K562 (cell line): ENCODE measurements at regions of chr2 and their contacts with region 1.

Region 1: DNA sequence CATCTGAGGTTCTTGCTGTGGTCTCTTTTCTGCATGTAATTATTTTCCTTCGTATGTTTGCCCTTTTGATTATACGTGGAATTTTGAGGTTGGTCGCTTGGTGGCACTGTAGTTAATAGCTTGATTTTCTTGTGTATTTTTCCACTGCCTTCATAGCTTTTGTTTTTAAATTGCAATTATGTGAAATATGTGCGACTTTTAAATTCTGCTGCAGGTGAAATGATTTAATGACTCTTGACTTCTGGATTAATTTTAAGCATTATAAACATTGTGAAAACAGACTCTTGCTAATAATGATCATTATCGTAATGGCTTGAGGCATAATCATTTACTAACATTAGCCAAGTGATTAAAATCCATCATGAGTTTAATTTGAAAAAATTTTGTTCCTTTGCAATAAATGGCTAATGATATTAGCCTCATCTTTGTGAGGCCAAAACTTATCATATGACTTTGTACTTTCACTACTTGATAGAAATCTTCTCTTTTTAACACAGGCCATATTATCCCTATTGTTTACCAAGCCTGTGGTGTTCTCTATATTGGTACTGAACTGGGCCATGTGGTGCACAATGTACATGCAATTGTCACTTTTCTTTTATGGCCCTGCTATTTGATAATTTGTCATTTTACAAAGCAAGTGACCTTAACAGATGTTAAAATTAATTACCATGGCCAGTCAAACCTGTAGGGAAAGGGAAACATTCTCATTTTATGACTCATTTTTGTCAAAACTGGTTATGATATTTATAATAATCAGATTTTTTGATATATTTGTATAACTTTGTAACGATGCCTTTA is 62.8 kb upstream of the NEUROD1 start:
- DNase-seq: peak in 2 of 4 experiments; percentile 39 to 68
- ATAC-seq: peak; percentile 81
- H3K4me3 ChIP-seq: no peak overlapping the region
- H3K27ac ChIP-seq: no peak overlapping the region
- H3K4me1 ChIP-seq: no peaks in the 10 kb centered on the region
- H3K27me3 ChIP-seq: no peaks in the 10 kb centered on the region
- CTCF ChIP-seq: peak; percentile 53 to 86 (median 69); a peak in 5 of 6 replicates
- EP300 ChIP-seq: no peak
- POLR2A ChIP-seq: no peak
- RAD21 ChIP-seq: peak; percentile 94 to 95

Region 2: GRCh38 chr2:181904022-181904632 is 161.0 kb after region 1 on chr2:
- CTCF ChIA-PET with region 1: interaction called, 23 read pairs
- POLR2A ChIA-PET with region 1: no interaction called
- in situ Hi-C with region 1: no loop called
- intact Hi-C with region 1: loop called (anchors 1 kb)
- DNase-seq: peak; percentile 38 to 62 (median 42)
- ATAC-seq: peak; percentile 79
- H3K4me3 ChIP-seq: no peak overlapping the region
- H3K27ac ChIP-seq: no peak overlapping the region
- H3K4me1 ChIP-seq: peaks cover 0 to 7% of the 10 kb centered on the region in 2 experiments; a peak in 2 of 5 replicates
- H3K27me3 ChIP-seq: no peaks in the 10 kb centered on the region
- CTCF ChIP-seq: peak; percentile 45 to 78 (median 54); a peak in 5 of 6 replicates
- EP300 ChIP-seq: no peak
- POLR2A ChIP-seq: no peak
- RAD21 ChIP-seq: peak; percentile 82

Region 3: GRCh38 chr2:181953881-181954537 is 210.9 kb after region 1 on chr2:
- CTCF ChIA-PET with region 1: interaction called, 3 read pairs
- POLR2A ChIA-PET with region 1: interaction called, 3 read pairs
- in situ Hi-C with region 1: no loop called
- intact Hi-C with region 1: loop called (anchors 1 kb)
- DNase-seq: peak; percentile 67 to 85 (median 74)
- ATAC-seq: peak; percentile 96
- H3K4me3 ChIP-seq: peak overlapping the region; percentile 40
- H3K27ac ChIP-seq: peak overlapping the region; percentile 50; the same call in 1 of the 3 replicates
- H3K4me1 ChIP-seq: no peaks in the 10 kb centered on the region
- H3K27me3 ChIP-seq: no peaks in the 10 kb centered on the region
- CTCF ChIP-seq: peak; percentile 68 to 80 (median 70)
- EP300 ChIP-seq: no peak
- POLR2A ChIP-seq: no peak
- RAD21 ChIP-seq: peak; percentile 37 to 60

Region 4: DNA sequence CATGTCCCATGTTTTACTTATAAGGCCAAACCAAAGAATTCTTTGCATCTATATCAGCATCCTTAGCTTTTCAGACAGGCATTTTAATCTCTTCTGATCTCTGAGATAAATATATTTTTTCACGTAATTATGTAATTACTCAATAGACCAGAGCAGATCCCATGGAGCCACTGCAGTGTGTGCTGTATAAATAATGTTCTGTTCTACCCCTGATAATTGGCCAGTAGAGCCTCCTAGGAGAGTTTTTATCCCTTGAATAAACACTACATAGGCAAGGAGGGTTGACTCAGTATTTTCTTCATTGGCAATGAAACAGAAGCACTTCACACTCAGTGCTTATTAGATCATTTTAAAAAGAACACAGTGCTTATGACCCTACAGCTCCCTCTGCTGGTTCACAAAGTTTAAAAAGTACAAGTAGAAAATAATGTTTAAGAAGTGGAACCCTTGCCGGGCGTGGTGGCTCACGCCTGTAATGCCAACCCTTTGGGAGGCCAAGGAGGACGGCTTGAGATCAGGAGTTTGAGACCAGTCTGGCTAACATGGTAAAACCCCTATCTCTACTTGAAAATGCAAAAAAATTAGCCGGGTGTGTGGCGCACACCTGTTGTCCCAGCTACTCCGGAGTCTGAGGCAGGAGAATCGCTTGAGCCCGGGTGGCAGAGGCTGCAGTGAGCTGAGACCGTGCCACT is 334.5 kb after region 1 on chr2:
- CTCF ChIA-PET with region 1: interaction called, 8 read pairs
- POLR2A ChIA-PET with region 1: no interaction called
- in situ Hi-C with region 1: loop called (anchors 10 kb)
- intact Hi-C with region 1: loop called (anchors 1 kb)
- DNase-seq: peak in 2 of 4 experiments; percentile 7 to 68
- ATAC-seq: peak; percentile 74
- H3K4me3 ChIP-seq: no peak overlapping the region
- H3K27ac ChIP-seq: no peak overlapping the region
- H3K4me1 ChIP-seq: no peaks in the 10 kb centered on the region
- H3K27me3 ChIP-seq: no peaks in the 10 kb centered on the region
- CTCF ChIP-seq: peak; percentile 21 to 64 (median 59); a peak in 5 of 6 replicates
- EP300 ChIP-seq: no peak
- POLR2A ChIP-seq: no peak
- RAD21 ChIP-seq: peak; percentile 70 to 83

Region 5: DNA sequence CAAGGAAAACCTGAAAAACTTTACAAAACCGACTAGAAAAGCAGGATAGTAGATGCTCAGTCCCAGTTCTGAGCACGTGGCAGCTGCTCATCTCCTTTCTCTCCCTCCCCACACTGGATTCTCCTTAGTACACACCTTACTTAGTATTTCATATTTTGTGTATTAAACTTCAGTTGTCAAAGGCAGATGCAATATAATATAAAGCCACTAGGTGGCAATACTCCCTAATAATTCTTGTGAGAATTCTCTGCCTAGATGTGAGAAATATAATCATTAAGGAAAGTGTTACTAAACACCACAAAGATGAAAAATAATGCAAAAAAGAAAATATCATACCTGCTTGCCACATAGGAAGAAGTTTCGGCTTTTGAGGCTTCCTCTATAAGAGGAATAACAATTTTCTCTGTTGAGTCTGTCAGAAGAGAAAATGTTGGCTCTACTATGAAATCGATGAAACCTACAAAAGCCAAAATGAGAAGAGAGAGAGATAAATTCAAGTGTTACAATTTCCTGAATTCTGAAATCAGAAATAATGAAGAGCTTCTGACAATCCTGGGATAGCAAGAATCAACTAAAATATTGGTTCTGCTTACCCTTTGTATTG is 443.1 kb after region 1 on chr2:
- CTCF ChIA-PET with region 1: interaction called, 3 read pairs
- POLR2A ChIA-PET with region 1: no interaction called
- in situ Hi-C with region 1: no loop called
- intact Hi-C with region 1: loop called (anchors 5 kb)
- DNase-seq: peak; percentile 13 to 51 (median 16)
- ATAC-seq: peak; percentile 83
- H3K4me3 ChIP-seq: no peak overlapping the region
- H3K27ac ChIP-seq: no peak overlapping the region
- H3K4me1 ChIP-seq: no peaks in the 10 kb centered on the region
- H3K27me3 ChIP-seq: no peaks in the 10 kb centered on the region
- CTCF ChIP-seq: peak; percentile 57 to 88 (median 63); a peak in 5 of 6 replicates
- EP300 ChIP-seq: no peak
- POLR2A ChIP-seq: no peak
- RAD21 ChIP-seq: peak; percentile 89 to 90

Region 6: GRCh38 chr2:182240862-182241371 is 497.8 kb after region 1 on chr2:
- CTCF ChIA-PET with region 1: no interaction called
- POLR2A ChIA-PET with region 1: no interaction called
- in situ Hi-C with region 1: no loop called
- intact Hi-C with region 1: no loop called
- DNase-seq: peak in 1 of 4 experiments; percentile 13
- ATAC-seq: peak; percentile 67
- H3K4me3 ChIP-seq: no peak overlapping the region
- H3K27ac ChIP-seq: no peak overlapping the region
- H3K4me1 ChIP-seq: no peaks in the 10 kb centered on the region
- H3K27me3 ChIP-seq: no peaks in the 10 kb centered on the region
- CTCF ChIP-seq: peak; percentile 17 to 29 (median 25); a peak in 2 of 6 replicates
- EP300 ChIP-seq: no peak
- POLR2A ChIP-seq: no peak
- RAD21 ChIP-seq: peak; percentile 44 to 45

Region 7: DNA sequence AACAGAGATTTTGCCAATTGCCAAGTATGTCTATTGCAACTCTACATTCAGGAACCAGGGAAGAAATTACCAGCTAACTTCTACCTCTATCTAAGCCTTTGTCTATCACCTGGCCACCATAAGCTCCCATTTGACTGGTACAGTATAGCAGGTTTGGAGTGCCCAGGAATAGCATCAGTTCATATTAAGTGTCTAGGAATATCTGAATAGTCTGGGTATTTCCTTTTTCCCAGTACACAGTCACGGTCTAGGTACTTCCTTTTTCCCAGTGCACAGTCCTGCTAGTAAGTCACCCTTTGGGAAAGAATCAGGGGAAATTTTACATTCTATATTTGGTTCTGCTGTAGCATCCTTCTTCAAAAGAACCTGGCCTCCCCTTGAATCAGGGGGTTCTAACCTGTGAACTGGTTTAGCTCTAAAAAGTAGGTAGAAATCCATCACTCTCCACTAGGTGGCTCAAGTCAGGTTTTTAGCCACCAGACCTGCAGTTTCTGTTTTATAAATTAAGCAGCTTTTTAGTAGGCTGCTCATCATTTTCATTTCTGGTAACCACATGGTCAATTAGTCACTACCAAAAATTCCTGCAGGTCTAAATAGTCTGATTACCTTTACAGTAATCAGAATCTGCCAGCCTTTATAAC is 923.7 kb after region 1 on chr2:
- CTCF ChIA-PET with region 1: no interaction called
- POLR2A ChIA-PET with region 1: no interaction called
- in situ Hi-C with region 1: loop called (anchors 25 kb)
- intact Hi-C with region 1: no loop called
- DNase-seq: peak; percentile 27 to 49 (median 36)
- ATAC-seq: peak; percentile 83
- H3K4me3 ChIP-seq: no peak overlapping the region
- H3K27ac ChIP-seq: no peak overlapping the region
- H3K4me1 ChIP-seq: no peaks in the 10 kb centered on the region
- H3K27me3 ChIP-seq: peaks cover 2 to 13% of the 10 kb centered on the region in 2 experiments; a peak in 3 of 5 replicates
- CTCF ChIP-seq: peak; percentile 37 to 59 (median 57); a peak in 5 of 6 replicates
- EP300 ChIP-seq: no peak
- POLR2A ChIP-seq: no peak
- RAD21 ChIP-seq: peak in 1 of 2 experiments; percentile 65; a peak in 3 of 4 replicates